ENCODE measurements at regions of chr19 and their contacts with region 1.

Region 1: DNA sequence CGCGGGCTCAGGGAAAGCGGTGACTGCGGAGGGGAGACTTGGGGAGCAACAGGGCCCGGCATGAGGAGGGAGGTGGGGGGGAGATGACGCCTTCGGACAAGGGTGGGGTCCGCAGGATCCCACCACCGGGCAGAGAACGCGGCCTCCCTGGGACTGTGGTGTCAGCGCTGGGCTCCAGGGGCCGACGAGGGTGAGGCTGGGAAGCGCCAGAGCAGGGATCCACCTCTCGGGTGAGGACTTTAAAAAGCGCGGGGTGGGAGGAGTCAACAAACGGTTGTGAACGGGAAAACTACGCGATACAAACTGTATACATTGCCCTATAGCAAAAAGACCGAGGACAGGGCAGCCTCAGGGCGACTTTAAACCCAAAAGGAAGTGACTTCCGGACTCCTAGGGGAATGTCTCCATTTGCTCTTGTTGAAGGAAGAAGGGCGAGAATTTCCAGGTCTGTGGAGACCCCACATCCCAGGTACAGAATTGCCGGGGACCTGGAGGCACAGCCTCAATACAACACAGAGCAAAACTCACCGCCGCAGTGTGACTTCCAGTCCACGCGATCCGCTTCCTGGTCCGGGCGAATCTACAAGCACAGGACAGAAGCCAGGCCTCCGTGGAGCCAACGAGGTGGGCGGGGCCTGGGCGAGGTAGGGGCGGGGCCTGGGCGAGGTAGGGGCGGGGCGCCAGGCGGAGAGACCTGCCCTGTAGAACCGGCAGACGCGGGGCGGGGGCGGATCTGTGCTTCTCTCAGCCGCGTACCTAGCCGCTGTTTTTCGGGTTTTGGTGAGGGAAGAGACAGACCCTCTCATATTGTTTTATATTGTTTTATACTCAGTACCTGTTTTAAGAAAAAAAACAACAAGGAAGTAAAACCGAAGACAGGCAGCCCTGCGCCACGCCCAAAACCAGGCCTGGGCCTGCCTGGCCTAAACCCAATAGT is at the start of gene ZNF888:
- DNase-seq: peak; percentile 86
- H3K4me3 ChIP-seq: peak within 1 kb of the TSS; percentile 46 to 81 (median 51)
- H3K27ac ChIP-seq: peak within 1 kb of the TSS; percentile 65
- H3K4me1 ChIP-seq: no peaks in the 10 kb centered on the region
- H3K27me3 ChIP-seq: no peaks in the 10 kb centered on the region
- CTCF ChIP-seq: no peak
- POLR2A ChIP-seq: peak; percentile 77
- total RNA-seq, gene ZNF888: 2.9 and 3.9 TPM in 2 replicates

Region 2: DNA sequence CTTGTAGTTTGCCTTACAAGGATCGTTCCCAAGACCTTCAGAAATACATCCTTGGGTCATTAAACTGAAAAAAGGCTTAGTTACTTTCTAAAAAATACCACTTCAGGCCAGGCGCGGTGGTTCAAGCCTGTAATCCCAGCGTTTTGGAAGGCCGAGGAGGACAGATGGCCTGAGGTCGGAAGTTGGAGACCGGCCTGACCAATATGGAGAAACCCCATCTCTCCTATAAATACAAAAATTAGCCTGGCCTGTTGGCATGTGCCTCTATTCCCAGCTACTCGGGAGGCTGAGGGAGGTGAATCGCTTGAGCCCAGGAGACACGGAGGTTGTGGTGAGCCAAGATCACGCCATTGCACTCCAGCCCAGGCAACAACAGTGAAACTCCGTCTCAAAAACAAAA is 99.4 kb before region 1 on chr19:
- CTCF ChIA-PET with region 1: no interaction called
- POLR2A ChIA-PET with region 1: no interaction called
- dilution Hi-C with region 1: no loop called
- intact Hi-C with region 1: loop called (anchors 1 kb)
- DNase-seq: no peak
- H3K4me3 ChIP-seq: no peak overlapping the region
- H3K27ac ChIP-seq: no peak overlapping the region
- H3K4me1 ChIP-seq: no peaks in the 10 kb centered on the region
- H3K27me3 ChIP-seq: no peaks in the 10 kb centered on the region
- CTCF ChIP-seq: no peak
- POLR2A ChIP-seq: no peak

Region 3: DNA sequence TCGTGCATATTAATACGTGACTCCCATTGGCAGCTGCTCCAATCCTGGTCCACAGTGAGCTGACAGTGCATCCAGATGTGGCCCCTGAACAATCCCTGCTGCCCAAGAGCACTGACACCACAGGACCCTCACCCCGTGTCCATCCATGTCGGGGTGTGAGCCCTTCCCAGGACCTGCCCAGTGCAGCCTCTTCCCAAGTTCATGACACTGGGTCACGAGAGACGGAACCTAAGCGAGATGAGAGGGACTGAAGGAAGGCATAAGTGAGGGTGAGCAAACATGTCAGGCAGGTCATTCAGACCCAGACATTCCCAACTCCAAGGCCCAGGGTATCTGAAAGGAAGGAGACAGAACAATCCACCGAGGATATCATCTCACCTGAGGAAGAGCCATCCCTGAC is 69.2 kb before region 1 on chr19:
- CTCF ChIA-PET with region 1: no interaction called
- POLR2A ChIA-PET with region 1: no interaction called
- dilution Hi-C with region 1: no loop called
- intact Hi-C with region 1: loop called (anchors 10 kb)
- DNase-seq: no peak
- H3K4me3 ChIP-seq: no peak overlapping the region
- H3K27ac ChIP-seq: no peak overlapping the region
- H3K4me1 ChIP-seq: peaks cover 3% of the 10 kb centered on the region
- H3K27me3 ChIP-seq: no peaks in the 10 kb centered on the region
- CTCF ChIP-seq: no peak
- POLR2A ChIP-seq: no peak

Region 4: GRCh38 chr19:52897144-52897935 is 25.8 kb before region 1 on chr19 and contains the start of gene ZNF320:
- CTCF ChIA-PET with region 1: no interaction called
- POLR2A ChIA-PET with region 1: no interaction called
- dilution Hi-C with region 1: no loop called
- intact Hi-C with region 1: loop called (anchors 1 kb)
- DNase-seq: peak; percentile 96
- H3K4me3 ChIP-seq: peak within 1 kb of the TSS; percentile 83 to 99 (median 97)
- H3K27ac ChIP-seq: peak within 1 kb of the TSS; percentile 89
- H3K4me1 ChIP-seq: peaks cover 6% of the 10 kb centered on the region
- H3K27me3 ChIP-seq: no peaks in the 10 kb centered on the region
- CTCF ChIP-seq: no peak
- POLR2A ChIP-seq: peak; percentile 69
- total RNA-seq, gene ZNF320: 10.9 and 11.1 TPM in 2 replicates

Region 5: GRCh38 chr19:52962394-52963246 is 39.5 kb after region 1 on chr19 and contains the start of gene ZNF816:
- CTCF ChIA-PET with region 1: no interaction called
- POLR2A ChIA-PET with region 1: no interaction called
- dilution Hi-C with region 1: no loop called
- intact Hi-C with region 1: loop called (anchors 2 kb)
- DNase-seq: peak; percentile 96
- H3K4me3 ChIP-seq: peak within 1 kb of the TSS; percentile 74 to 83 (median 77)
- H3K27ac ChIP-seq: peak within 1 kb of the TSS; percentile 56
- H3K4me1 ChIP-seq: peaks cover 4% of the 10 kb centered on the region
- H3K27me3 ChIP-seq: no peaks in the 10 kb centered on the region
- CTCF ChIP-seq: no peak
- POLR2A ChIP-seq: peak; percentile 87
- total RNA-seq, gene ZNF816: 4.9 and 5.3 TPM in 2 replicates

Region 6: GRCh38 chr19:53071291-53071690 is 148.2 kb after region 1 on chr19:
- CTCF ChIA-PET with region 1: no interaction called
- POLR2A ChIA-PET with region 1: no interaction called
- dilution Hi-C with region 1: no loop called
- intact Hi-C with region 1: no loop called
- DNase-seq: no peak
- H3K4me3 ChIP-seq: no peak overlapping the region
- H3K27ac ChIP-seq: no peak overlapping the region
- H3K4me1 ChIP-seq: no peaks in the 10 kb centered on the region
- H3K27me3 ChIP-seq: no peaks in the 10 kb centered on the region
- CTCF ChIP-seq: no peak
- POLR2A ChIP-seq: no peak